HepG2 (cell line): ENCODE measurements at regions of chr2 and their contacts with region 1.

Region 1: DNA sequence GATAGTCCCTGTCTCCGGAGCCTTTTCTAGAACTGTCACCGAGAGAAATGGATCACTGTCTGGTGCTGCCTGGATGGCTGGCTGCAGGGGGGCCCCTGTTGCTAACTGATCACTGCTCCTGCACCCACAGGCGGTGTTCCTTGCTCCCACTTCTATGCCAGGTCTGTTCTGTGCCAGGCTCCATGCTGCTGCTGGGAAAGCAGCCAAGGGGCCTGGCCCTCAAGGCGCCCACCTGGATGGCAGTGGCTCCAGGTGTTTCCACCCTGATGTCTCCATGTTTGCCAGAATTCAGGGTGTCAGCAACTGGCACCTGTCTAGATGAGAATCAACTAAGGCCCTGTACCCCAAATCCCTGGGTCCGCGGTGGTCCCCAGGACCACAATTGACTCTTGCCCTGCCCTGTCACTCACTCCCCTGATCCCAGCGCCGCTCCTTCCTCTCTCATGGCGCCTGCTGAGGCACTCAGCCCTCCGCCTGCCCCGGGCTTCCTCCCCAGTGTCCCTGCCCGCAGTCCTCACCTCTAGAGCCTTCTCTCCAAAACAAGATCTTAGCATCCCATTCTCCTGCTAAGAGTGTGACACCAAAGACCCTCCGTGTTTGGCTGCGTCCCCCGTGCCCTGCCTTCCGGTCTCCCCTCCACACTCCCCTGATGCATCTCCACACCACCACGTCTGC is 72.5 kb upstream of the OTOF start:
- DNase-seq: no peak
- ATAC-seq: no peak
- H3K4me3 ChIP-seq: no peak overlapping the region
- H3K27ac ChIP-seq: no peak overlapping the region
- H3K4me1 ChIP-seq: no peaks in the 10 kb centered on the region
- H3K27me3 ChIP-seq: peaks cover 3 to 53% of the 10 kb centered on the region in 2 experiments; a peak in 3 of 5 replicates
- CTCF ChIP-seq: no peak
- EP300 ChIP-seq: no peak
- POLR2A ChIP-seq: no peak
- RAD21 ChIP-seq: no peak

Region 2: DNA sequence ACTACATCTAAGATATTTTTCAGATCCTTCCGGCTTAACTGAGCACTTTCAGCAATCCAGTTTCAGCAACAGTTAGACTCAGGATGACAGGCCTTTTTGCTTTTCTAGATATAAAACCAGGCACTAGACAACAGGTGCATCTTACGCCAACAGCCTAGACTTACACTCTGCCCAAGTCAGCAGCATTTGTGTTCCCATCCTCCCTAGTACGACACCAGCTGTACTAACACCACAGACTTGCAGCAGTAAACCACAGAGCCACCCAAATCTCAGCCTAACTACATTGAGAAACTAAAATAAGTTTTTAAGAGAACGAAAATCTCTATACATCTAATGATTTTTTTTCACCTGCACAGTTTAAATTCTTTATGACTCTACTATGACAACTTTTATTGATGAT is 1118.8 kb before region 1 on chr2:
- CTCF ChIA-PET with region 1: no interaction called
- POLR2A ChIA-PET with region 1: no interaction called
- in situ Hi-C with region 1: no loop called
- intact Hi-C with region 1: loop called (anchors 5 kb)
- DNase-seq: no peak
- ATAC-seq: no peak
- H3K4me3 ChIP-seq: no peak overlapping the region
- H3K27ac ChIP-seq: no peak overlapping the region
- H3K4me1 ChIP-seq: no peaks in the 10 kb centered on the region
- H3K27me3 ChIP-seq: no peaks in the 10 kb centered on the region
- CTCF ChIP-seq: no peak
- EP300 ChIP-seq: no peak
- POLR2A ChIP-seq: no peak
- RAD21 ChIP-seq: no peak

Region 3: DNA sequence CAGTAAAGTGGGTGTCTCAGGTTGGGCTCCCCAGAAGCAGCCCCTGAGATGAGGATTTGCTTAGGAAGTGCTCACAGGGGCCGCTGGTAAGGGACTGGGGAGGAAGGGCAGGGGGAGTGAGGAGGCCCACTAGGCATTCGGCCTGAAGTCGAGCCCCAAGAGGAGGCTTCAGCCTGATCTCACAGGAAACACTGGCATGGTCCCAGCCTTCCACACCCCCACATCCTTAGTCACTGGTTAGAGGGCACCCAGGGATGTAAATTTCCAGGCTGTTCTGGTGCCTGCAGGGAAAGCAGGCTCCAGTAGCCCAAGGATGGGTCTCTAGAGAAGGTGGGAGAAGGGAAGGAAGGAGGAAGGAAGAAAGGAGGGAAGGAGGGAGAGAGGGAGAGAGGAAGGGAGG is 119.8 kb after region 1 on chr2:
- CTCF ChIA-PET with region 1: no interaction called
- POLR2A ChIA-PET with region 1: no interaction called
- in situ Hi-C with region 1: no loop called
- intact Hi-C with region 1: no loop called
- DNase-seq: no peak
- ATAC-seq: no peak
- H3K4me3 ChIP-seq: no peak overlapping the region
- H3K27ac ChIP-seq: no peak overlapping the region
- H3K4me1 ChIP-seq: 0 out of 2 replicates have a peak, but pooled peaks cover 5% of the 10 kb centered on the region
- H3K27me3 ChIP-seq: peaks cover 15 to 47% of the 10 kb centered on the region in 2 experiments; a peak in 4 of 5 replicates
- CTCF ChIP-seq: no peak
- EP300 ChIP-seq: no peak
- POLR2A ChIP-seq: no peak
- RAD21 ChIP-seq: no peak

Region 4: GRCh38 chr2:26982102-26982742 is 431.8 kb after region 1 on chr2:
- CTCF ChIA-PET with region 1: no interaction called
- POLR2A ChIA-PET with region 1: no interaction called
- in situ Hi-C with region 1: no loop called
- intact Hi-C with region 1: no loop called
- DNase-seq: peak; percentile 78
- ATAC-seq: peak; percentile 99
- H3K4me3 ChIP-seq: no peak overlapping the region; a peak in 1 of 6 replicates
- H3K27ac ChIP-seq: no peak overlapping the region
- H3K4me1 ChIP-seq: peaks cover 14% of the 10 kb centered on the region
- H3K27me3 ChIP-seq: no peaks in the 10 kb centered on the region
- CTCF ChIP-seq: peak; percentile 60
- EP300 ChIP-seq: no peak
- POLR2A ChIP-seq: no peak
- RAD21 ChIP-seq: no peak